CD8-positive, alpha-beta memory T cell (primary cell): ENCODE measurements at regions of chr5 and their contacts with region 1.

Region 1: DNA sequence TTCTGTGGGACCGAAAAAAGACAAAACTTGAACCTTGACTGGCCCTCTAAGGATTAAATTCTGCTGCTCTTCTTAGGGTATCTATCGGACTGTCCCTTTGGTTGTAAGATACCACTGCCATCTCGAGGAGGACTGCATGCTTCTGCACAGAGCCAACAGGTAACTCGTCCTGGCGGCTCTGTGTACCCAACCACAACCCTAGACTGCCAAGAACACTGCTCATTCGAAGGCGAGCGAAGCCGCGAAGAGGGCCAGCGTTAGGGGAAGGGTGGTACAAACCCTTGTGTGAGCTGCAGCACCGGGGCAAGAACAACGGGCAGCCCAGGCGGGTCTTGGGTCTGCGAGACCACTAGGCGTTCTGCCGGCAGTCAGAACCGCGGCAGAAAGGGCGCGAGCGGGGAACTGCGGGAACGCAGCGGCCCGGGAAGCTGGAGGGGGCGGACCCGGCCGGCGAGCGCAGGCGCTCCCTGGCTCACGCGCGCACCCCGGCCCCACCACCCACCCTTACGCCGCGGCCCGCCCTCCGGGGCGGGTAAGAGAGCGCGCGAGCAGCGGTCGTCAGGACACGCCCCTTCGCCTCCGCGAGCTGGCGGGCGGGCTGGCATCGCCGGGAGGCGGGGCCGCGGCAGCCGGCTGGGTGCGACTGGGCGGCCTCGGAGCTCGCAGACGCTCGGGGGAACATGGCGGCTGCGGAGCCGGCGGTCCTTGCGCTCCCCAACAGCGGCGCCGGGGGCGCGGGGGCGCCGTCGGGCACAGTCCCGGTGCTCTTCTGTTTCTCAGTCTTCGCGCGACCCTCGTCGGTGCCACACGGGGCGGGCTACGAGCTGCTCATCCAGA is at the start of gene ISOC1:
- DNase-seq: peak; percentile 87 to 95 (median 94)
- H3K4me3 ChIP-seq: peak within 1 kb of the TSS; percentile 69
- H3K4me3 Mint-ChIP-seq: peak within 1 kb of the TSS; percentile 90 to 97 (median 92)
- H3K27ac ChIP-seq: peak within 1 kb of the TSS; percentile 62
- H3K27ac Mint-ChIP-seq: peak within 1 kb of the TSS; percentile 80 to 92 (median 88)
- H3K4me1 ChIP-seq: peaks cover 15% of the 10 kb centered on the region
- H3K4me1 Mint-ChIP-seq: peaks cover 29 to 46% (median 44%) of the 10 kb centered on the region in 3 donors
- H3K27me3 ChIP-seq: no peaks in the 10 kb centered on the region
- H3K27me3 Mint-ChIP-seq: peaks cover 2 to 18% of the 10 kb centered on the region in 2 donors
- total RNA-seq, gene ISOC1: 22.7 to 24.7 TPM

Region 2: DNA sequence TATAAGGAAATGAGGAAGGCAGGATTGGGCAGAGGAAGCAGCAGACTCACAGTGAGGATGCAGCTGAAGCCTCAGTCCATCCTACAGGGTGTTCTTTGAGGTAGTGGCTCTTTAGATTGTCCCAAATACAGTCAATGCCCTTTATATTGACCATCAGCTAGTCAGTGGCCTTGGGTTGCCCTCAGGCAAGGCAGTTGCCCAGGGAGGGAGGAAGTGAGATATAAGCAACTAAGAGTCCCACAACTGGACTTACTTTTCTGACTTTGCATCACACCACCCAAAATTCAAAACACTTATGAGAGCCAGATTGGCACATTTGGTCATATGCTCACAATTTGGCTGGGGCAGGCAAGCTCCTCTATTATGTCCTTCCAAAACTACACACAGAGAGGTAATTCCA is 1020.1 kb before region 1 on chr5:
- CTCF ChIA-PET with region 1: no interaction called
- POLR2A ChIA-PET with region 1: interaction called, 11 read pairs
- DNase-seq: no peak
- H3K4me3 ChIP-seq: no peak overlapping the region
- H3K4me3 Mint-ChIP-seq: no peak overlapping the region
- H3K27ac ChIP-seq: no peak overlapping the region
- H3K27ac Mint-ChIP-seq: peak overlapping the region in 2 of 8 donors; percentile 2 to 46
- H3K4me1 ChIP-seq: peaks cover 9% of the 10 kb centered on the region
- H3K4me1 Mint-ChIP-seq: peaks cover 18 to 42% (median 24%) of the 10 kb centered on the region in 3 donors
- H3K27me3 ChIP-seq: no peaks in the 10 kb centered on the region
- H3K27me3 Mint-ChIP-seq: no peaks in the 10 kb centered on the region

Region 3: DNA sequence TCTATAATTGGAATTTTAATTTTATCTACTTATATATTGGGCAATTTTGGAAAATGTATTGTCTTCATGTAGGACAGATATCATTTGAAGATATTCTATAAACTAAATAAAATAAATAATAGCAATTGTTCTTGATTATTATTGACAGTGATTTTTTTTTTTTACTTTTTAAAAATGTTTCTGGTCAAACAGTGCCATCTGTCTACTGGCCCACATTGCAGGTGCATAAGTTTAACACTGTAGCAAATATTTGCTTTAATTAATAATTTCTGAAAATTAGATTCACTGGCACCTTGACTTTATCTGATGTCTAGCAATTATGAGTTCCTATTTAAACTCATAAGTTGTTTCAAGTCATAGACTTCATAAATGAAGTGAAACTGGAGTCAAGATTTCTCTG is 40.9 kb before region 1 on chr5:
- CTCF ChIA-PET with region 1: no interaction called
- POLR2A ChIA-PET with region 1: no interaction called
- DNase-seq: no peak
- H3K4me3 ChIP-seq: no peak overlapping the region
- H3K4me3 Mint-ChIP-seq: no peak overlapping the region
- H3K27ac ChIP-seq: no peak overlapping the region
- H3K27ac Mint-ChIP-seq: no peak overlapping the region
- H3K4me1 ChIP-seq: no peaks in the 10 kb centered on the region
- H3K4me1 Mint-ChIP-seq: no peaks in the 10 kb centered on the region
- H3K27me3 ChIP-seq: no peaks in the 10 kb centered on the region
- H3K27me3 Mint-ChIP-seq: peaks cover 0 to 18% of the 10 kb centered on the region in 2 donors

Region 4: GRCh38 chr5:129079496-129079895 is 14.8 kb before region 1 on chr5:
- CTCF ChIA-PET with region 1: no interaction called
- POLR2A ChIA-PET with region 1: no interaction called
- DNase-seq: no peak
- H3K4me3 ChIP-seq: no peak overlapping the region
- H3K4me3 Mint-ChIP-seq: no peak overlapping the region
- H3K27ac ChIP-seq: no peak overlapping the region
- H3K27ac Mint-ChIP-seq: no peak overlapping the region
- H3K4me1 ChIP-seq: no peaks in the 10 kb centered on the region
- H3K4me1 Mint-ChIP-seq: no peaks in the 10 kb centered on the region
- H3K27me3 ChIP-seq: no peaks in the 10 kb centered on the region
- H3K27me3 Mint-ChIP-seq: peaks cover 2 to 12% of the 10 kb centered on the region in 2 donors

Region 5: GRCh38 chr5:129125810-129126209 is 31.5 kb after region 1 on chr5:
- CTCF ChIA-PET with region 1: interaction called, 10 read pairs
- POLR2A ChIA-PET with region 1: interaction called, 16 read pairs
- DNase-seq: no peak
- H3K4me3 ChIP-seq: peak overlapping the region; percentile 8
- H3K4me3 Mint-ChIP-seq: peak overlapping the region; percentile 64 to 81 (median 66)
- H3K27ac ChIP-seq: no peak overlapping the region
- H3K27ac Mint-ChIP-seq: peak overlapping the region; percentile 34 to 92 (median 88)
- H3K4me1 ChIP-seq: peaks cover 10% of the 10 kb centered on the region
- H3K4me1 Mint-ChIP-seq: peaks cover 11 to 15% (median 12%) of the 10 kb centered on the region in 3 donors
- H3K27me3 ChIP-seq: no peaks in the 10 kb centered on the region
- H3K27me3 Mint-ChIP-seq: no peaks in the 10 kb centered on the region